PC-9 (cell line): ENCODE measurements at regions of chr6 and their contacts with region 1.

Region 1: DNA sequence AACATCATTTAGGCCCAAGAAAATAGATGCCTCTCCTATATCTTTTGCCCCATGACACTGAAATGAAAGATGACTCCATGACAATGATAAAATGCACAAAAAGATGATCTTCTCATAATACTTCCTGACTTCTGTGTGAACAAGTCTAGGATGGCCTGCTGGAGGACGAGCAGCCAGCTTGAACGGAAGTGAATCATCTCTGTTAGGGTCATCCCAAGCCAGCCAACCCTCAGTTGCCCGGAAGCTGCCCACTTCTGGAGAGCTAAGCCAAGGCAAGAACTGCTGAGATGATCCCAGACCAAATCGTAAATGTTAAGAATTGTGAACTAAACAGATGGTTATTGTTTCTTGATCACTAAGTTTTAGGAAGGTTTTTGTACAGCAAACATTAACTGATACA is 249.7 kb upstream of the HS3ST5 start:
- DNase-seq: no peak
- H3K4me3 ChIP-seq: no peak overlapping the region
- H3K27ac ChIP-seq: no peak overlapping the region
- H3K4me1 ChIP-seq: no peaks in the 10 kb centered on the region
- H3K27me3 ChIP-seq: no peaks in the 10 kb centered on the region
- CTCF ChIP-seq: no peak

Region 2: DNA sequence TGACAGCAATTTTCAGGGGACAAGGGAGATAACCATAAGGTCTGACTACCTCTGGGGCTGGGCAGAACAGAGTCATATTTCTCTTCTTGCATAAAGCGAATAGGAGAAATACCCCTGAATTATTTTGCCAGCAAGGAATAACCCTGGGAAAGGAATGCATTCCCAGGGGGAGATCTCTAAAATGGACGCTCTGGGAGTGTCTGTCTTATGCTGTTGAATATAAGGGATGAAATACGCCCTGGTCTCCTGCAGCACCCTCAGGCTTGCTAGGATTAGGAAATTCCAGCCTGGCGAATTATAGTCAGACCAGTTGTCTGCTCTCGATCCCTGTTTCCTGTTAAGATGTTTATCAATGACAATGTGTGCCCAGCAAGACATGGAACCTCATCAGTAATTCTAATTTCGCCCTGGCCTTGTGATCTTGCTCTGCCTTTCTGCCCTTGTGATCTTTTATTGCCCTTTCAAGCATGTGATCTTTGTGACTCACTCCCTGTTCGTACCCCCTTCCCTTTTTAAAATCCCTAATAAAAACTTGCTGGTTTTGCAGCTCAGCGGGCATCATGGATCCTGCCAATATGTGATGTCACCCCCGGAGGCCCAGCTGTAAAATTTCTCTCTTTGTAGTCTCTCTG is 28.1 kb before region 1 on chr6:
- CTCF ChIA-PET with region 1: no interaction called
- POLR2A ChIA-PET with region 1: no interaction called
- intact Hi-C with region 1: loop called (anchors 1 kb)
- DNase-seq: no peak
- H3K4me3 ChIP-seq: no peak overlapping the region
- H3K27ac ChIP-seq: no peak overlapping the region
- H3K4me1 ChIP-seq: no peaks in the 10 kb centered on the region
- H3K27me3 ChIP-seq: no peaks in the 10 kb centered on the region
- CTCF ChIP-seq: no peak